ENCODE measurements at regions of chr7 and their contacts with region 1.

Region 1: GRCh38 chr7:117296066-117296465 is 26.8 kb downstream of the WNT2 start:
- DNase-seq: no peak
- H3K4me3 ChIP-seq: no peak overlapping the region
- H3K27ac ChIP-seq: no peak overlapping the region
- H3K4me1 ChIP-seq: no peaks in the 10 kb centered on the region
- H3K27me3 ChIP-seq: no peaks in the 10 kb centered on the region
- CTCF ChIP-seq: no peak
- EP300 ChIP-seq: no peak
- POLR2A ChIP-seq: no peak

Region 2: DNA sequence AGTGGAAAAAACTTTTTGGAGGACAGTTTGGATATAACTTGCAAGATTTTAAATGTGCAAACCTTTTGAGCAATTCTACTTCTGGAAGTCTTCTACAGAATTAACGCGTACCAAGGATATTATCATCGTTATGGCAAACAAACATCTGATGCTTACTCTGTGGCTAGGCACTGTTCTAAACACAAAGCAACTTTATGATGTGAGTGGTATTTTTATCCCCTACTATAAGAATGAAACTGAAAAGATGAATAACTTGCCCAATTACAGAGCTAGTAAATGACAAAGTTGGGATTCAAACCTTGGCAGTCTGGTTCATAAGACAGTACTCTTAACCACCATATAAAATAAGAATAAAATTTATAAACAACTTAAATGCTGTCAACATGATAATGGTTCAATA is 115.5 kb after region 1 on chr7:
- in situ Hi-C with region 1: no loop called
- intact Hi-C with region 1: loop called (anchors 5 kb)
- DNase-seq: no peak
- H3K4me3 ChIP-seq: no peak overlapping the region
- H3K27ac ChIP-seq: no peak overlapping the region
- H3K4me1 ChIP-seq: no peaks in the 10 kb centered on the region
- H3K27me3 ChIP-seq: no peaks in the 10 kb centered on the region
- CTCF ChIP-seq: no peak
- EP300 ChIP-seq: no peak
- POLR2A ChIP-seq: no peak